CD8-positive, alpha-beta T cell (primary cell): ENCODE measurements at regions of chr10 and their contacts with region 1.

Region 1: DNA sequence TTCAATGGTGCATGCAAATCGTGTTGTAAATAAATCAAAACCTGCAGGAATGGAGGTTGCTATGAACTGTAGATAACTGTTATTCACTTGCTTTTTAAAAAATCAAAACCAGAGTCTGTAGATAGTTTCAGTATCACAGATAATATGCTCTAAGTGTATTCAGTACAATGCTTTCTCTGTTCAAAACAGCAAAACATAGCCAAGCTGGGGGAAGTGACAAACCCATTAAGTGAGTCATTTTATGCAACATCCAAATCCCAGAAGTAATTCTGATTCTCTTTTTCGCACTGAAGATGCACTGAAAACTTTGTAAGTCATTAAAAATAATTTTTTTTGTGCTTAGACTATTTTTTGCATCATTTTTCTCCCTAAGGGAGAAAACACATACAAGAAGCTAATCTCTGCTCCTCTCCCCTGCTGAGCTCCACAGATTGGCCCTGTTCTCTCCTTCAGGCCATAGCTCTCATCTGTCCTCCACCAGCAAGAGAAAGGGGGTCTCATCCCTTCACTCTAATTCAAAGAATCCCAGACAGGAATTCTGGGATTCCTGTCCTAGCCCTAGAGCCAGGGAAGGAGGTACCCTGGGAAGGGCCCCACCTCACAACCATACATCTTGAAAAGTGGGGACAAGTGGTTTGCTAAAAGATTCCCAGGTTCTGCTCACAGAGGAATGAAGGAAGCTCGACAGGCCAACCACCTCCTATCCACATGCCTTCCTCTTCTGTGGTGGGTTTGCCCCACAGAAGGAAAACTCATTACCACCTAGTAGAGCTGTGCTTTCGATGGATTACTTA is 4.9 kb downstream of the PRTFDC1 start:
- DNase-seq: no peak
- ATAC-seq: no peak
- H3K4me3 ChIP-seq: no peak overlapping the region
- H3K4me3 Mint-ChIP-seq: no peak overlapping the region
- H3K27ac ChIP-seq: no peak overlapping the region
- H3K27ac Mint-ChIP-seq: peak overlapping the region; percentile 1
- H3K4me1 ChIP-seq: peaks cover 9% of the 10 kb centered on the region
- H3K4me1 Mint-ChIP-seq: peaks cover 14% of the 10 kb centered on the region
- H3K27me3 ChIP-seq: no peaks in the 10 kb centered on the region
- H3K27me3 Mint-ChIP-seq: no peaks in the 10 kb centered on the region
- CTCF ChIP-seq: no peak

Region 2: GRCh38 chr10:24625778-24626177 is 321.7 kb before region 1 on chr10:
- CTCF ChIA-PET with region 1: no interaction called
- POLR2A ChIA-PET with region 1: no interaction called
- intact Hi-C with region 1: loop called in 1 of 2 experiments (anchors 5 kb)
- DNase-seq: no peak
- ATAC-seq: no peak
- H3K4me3 ChIP-seq: no peak overlapping the region
- H3K4me3 Mint-ChIP-seq: no peak overlapping the region
- H3K27ac ChIP-seq: no peak overlapping the region
- H3K27ac Mint-ChIP-seq: peak overlapping the region; percentile 18
- H3K4me1 ChIP-seq: peaks cover 25% of the 10 kb centered on the region
- H3K4me1 Mint-ChIP-seq: peaks cover 33% of the 10 kb centered on the region
- H3K27me3 ChIP-seq: no peaks in the 10 kb centered on the region
- H3K27me3 Mint-ChIP-seq: no peaks in the 10 kb centered on the region
- CTCF ChIP-seq: no peak

Region 3: GRCh38 chr10:24756283-24756682 is 191.2 kb before region 1 on chr10:
- CTCF ChIA-PET with region 1: no interaction called
- POLR2A ChIA-PET with region 1: no interaction called
- intact Hi-C with region 1: no loop called
- DNase-seq: no peak
- ATAC-seq: no peak
- H3K4me3 ChIP-seq: no peak overlapping the region
- H3K4me3 Mint-ChIP-seq: no peak overlapping the region
- H3K27ac ChIP-seq: no peak overlapping the region
- H3K27ac Mint-ChIP-seq: no peak overlapping the region
- H3K4me1 ChIP-seq: no peaks in the 10 kb centered on the region
- H3K4me1 Mint-ChIP-seq: no peaks in the 10 kb centered on the region
- H3K27me3 ChIP-seq: no peaks in the 10 kb centered on the region
- H3K27me3 Mint-ChIP-seq: no peaks in the 10 kb centered on the region
- CTCF ChIP-seq: no peak

Region 4: DNA sequence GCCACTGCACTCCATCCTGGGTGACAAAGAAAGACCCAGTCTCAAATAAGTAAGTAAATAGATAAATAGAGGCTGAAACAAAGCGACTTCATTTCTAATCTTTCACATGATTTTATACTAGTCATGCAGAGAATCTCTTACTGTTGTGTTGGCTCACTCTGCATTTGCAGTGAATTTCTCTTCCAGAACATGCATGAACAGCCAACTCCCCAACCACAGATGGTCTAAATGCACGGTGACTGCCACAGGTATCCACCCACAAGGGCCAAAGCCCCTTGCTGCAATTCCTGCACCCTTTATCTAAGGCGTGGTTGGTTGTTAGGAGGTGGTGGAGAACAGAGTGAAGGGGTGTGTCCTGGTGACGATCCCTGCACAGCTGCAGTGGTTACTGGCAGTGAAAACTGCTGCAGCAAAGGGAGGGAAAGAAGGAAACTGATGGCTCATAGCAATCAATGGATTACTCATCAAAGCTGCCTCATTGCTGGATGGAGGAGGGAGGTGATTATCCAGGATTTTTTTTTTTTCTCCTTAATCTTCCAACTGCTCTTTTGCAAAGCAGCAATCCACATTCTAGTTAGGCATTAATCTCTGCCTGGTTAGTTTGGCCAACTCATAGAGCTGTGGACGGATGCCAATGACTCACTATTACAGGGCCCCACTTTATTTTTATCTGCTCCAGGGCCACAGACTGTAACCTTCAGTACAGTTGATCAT is 45.7 kb before region 1 on chr10:
- CTCF ChIA-PET with region 1: no interaction called
- POLR2A ChIA-PET with region 1: interaction called, 3 read pairs
- intact Hi-C with region 1: loop called in 1 of 2 experiments (anchors 5 kb)
- DNase-seq: no peak
- ATAC-seq: no peak
- H3K4me3 ChIP-seq: no peak overlapping the region
- H3K4me3 Mint-ChIP-seq: peak overlapping the region; percentile 30
- H3K27ac ChIP-seq: no peak overlapping the region
- H3K27ac Mint-ChIP-seq: peak overlapping the region; percentile 71
- H3K4me1 ChIP-seq: peaks cover 25% of the 10 kb centered on the region
- H3K4me1 Mint-ChIP-seq: peaks cover 31% of the 10 kb centered on the region
- H3K27me3 ChIP-seq: no peaks in the 10 kb centered on the region
- H3K27me3 Mint-ChIP-seq: no peaks in the 10 kb centered on the region
- CTCF ChIP-seq: no peak

Region 5: DNA sequence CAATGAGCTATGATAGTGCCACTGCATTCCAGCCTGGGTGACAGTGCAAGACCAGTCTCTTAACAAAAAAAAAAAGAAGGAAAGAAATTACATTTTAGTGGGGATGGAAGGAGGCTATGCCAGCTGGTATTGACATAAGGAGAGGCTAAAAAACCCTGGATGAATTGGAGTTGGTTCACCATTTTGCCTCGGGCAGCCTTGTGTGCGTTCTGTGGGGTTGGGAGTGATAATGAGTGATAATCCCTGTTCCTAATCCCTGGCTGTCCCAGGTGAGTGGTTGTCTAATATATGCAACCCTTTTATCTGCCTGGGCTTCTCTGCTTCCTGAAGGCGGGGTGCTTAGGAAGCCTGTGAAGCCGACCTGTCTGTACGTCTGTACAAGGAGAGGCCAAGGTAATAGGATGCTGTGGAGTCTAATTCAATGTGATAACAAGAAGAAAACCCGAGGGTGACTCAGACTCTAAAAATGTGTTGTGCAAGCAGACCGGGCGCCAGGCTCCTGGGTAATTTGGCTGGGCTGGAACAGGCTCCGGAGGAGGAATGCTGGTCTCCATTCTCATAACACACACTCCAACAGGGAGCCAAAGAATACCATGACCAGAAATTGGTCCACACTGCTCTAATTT is 112.4 kb after region 1 on chr10:
- CTCF ChIA-PET with region 1: no interaction called
- POLR2A ChIA-PET with region 1: no interaction called
- intact Hi-C with region 1: no loop called
- DNase-seq: no peak
- ATAC-seq: no peak
- H3K4me3 ChIP-seq: no peak overlapping the region
- H3K4me3 Mint-ChIP-seq: no peak overlapping the region
- H3K27ac ChIP-seq: no peak overlapping the region
- H3K27ac Mint-ChIP-seq: no peak overlapping the region
- H3K4me1 ChIP-seq: peaks cover 7% of the 10 kb centered on the region
- H3K4me1 Mint-ChIP-seq: peaks cover 14% of the 10 kb centered on the region
- H3K27me3 ChIP-seq: no peaks in the 10 kb centered on the region
- H3K27me3 Mint-ChIP-seq: peaks cover 2% of the 10 kb centered on the region
- CTCF ChIP-seq: no peak